Common myeloid progenitor, CD34-positive (primary cell): ENCODE measurements at regions of chr11 and their contacts with region 1.

Region 1: DNA sequence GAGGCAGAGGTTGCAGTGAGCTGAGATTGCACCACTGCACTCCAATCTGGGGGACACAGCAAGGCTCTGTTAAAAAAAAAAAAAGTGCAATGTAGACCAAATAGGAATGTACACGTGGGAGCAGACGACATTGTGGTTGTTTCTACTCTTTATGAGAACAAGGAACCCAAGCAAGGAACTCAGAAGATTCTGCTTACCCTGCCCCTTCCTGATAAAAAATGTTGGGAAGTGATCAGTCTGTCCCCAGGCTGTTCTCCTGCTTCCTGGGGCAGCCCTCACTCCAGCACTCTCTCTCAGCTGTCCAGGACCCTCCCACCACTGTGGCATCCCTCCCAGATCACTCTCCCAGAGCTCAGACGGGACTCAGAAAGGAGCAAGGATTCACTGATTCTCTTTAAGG is 31.8 kb downstream of the SLCO2B1 start:
- DNase-seq: no peak
- H3K4me3 ChIP-seq: no peak overlapping the region
- H3K27ac ChIP-seq: no peak overlapping the region
- H3K4me1 ChIP-seq: peaks cover 0 to 9% (median 0%) of the 10 kb centered on the region in 4 experiments
- H3K27me3 ChIP-seq: peaks cover 0 to 9% (median 4%) of the 10 kb centered on the region in 5 experiments

Region 2: DNA sequence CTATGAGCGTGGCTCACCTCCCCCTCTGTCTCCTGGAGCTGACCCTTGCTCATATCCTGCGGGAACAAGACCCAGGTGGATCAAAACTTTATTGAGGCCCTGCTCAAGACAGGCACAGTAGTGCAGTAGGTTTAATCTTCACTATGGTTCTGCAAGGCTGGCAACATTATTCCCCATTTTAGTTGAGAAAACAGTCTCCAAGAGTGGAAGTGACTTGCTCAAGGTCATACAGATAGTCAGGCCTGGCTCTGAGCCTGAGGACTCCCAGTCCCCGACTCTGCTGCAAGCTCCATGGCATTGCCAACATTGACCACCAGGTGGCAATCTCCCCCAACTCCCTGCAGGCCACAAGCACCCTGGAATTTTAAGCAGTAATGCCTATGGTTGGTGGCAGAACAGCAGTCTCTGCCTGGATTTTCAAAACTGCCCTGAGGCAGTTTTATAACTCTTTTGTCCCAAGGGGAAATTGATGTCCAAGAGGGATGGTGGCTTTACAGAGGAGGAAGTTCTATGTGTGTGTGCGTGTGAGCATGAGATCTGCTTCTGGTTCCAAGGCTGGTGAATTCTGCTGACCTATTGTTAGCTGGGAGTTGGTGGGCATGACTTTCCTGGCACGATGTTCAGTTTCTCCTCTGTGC is 159.8 kb before region 1 on chr11:
- CTCF ChIA-PET with region 1: no interaction called
- POLR2A ChIA-PET with region 1: interaction called, 11 read pairs
- DNase-seq: peak; percentile 73 to 87 (median 80)
- H3K4me3 ChIP-seq: no peak overlapping the region
- H3K27ac ChIP-seq: no peak overlapping the region
- H3K4me1 ChIP-seq: no peaks in the 10 kb centered on the region
- H3K27me3 ChIP-seq: no peaks in the 10 kb centered on the region